ENCODE measurements at regions of chr7 and their contacts with region 1.

Region 1: GRCh38 chr7:1532483-1533424 is 2.3 kb downstream of the MAFK start:
- DNase-seq: peak in 8 of 9 donors; percentile 57 to 70 (median 62)
- ATAC-seq: peak; percentile 52
- H3K4me3 ChIP-seq: peak overlapping the region; percentile 74
- H3K4me3 Mint-ChIP-seq: peak overlapping the region; percentile 87 to 94 (median 92)
- H3K27ac ChIP-seq: peak overlapping the region; percentile 90
- H3K27ac Mint-ChIP-seq: peak overlapping the region; percentile 92 to 99 (median 97)
- H3K4me1 ChIP-seq: peaks cover 7 to 10% of the 10 kb centered on the region in 2 donors
- H3K4me1 Mint-ChIP-seq: peaks cover 15 to 36% (median 21%) of the 10 kb centered on the region in 7 donors
- H3K27me3 ChIP-seq: no peaks in the 10 kb centered on the region
- H3K27me3 Mint-ChIP-seq: peaks cover 0 to 3% (median 0%) of the 10 kb centered on the region in 5 donors

Region 2: GRCh38 chr7:1459522-1459892 is 73.2 kb before region 1 on chr7:
- CTCF ChIA-PET with region 1: no interaction called
- POLR2A ChIA-PET with region 1: interaction called, 3 read pairs
- intact Hi-C with region 1: loop called (anchors 1 kb)
- DNase-seq: peak; percentile 98 to 99 (median 99)
- ATAC-seq: peak; percentile 97
- H3K4me3 ChIP-seq: peak overlapping the region; percentile 73
- H3K4me3 Mint-ChIP-seq: peak overlapping the region in 8 of 10 donors; percentile 58 to 75 (median 70)
- H3K27ac ChIP-seq: peak overlapping the region; percentile 55
- H3K27ac Mint-ChIP-seq: peak overlapping the region in 1 of 9 donors; percentile 76
- H3K4me1 ChIP-seq: peaks cover 8 to 14% of the 10 kb centered on the region in 2 donors
- H3K4me1 Mint-ChIP-seq: peaks cover 7 to 25% (median 18%) of the 10 kb centered on the region in 7 donors
- H3K27me3 ChIP-seq: no peaks in the 10 kb centered on the region
- H3K27me3 Mint-ChIP-seq: peaks cover 0 to 5% (median 0%) of the 10 kb centered on the region in 5 donors

Region 3: GRCh38 chr7:1512781-1513656 is 19.7 kb before region 1 on chr7:
- CTCF ChIA-PET with region 1: no interaction called
- POLR2A ChIA-PET with region 1: interaction called, 6 read pairs
- intact Hi-C with region 1: loop called (anchors 1 to 2 kb)
- DNase-seq: peak; percentile 34 to 71 (median 67)
- ATAC-seq: peak; percentile 82
- H3K4me3 ChIP-seq: no peak overlapping the region
- H3K4me3 Mint-ChIP-seq: peak overlapping the region; percentile 12 to 75 (median 62)
- H3K27ac ChIP-seq: no peak overlapping the region
- H3K27ac Mint-ChIP-seq: peak overlapping the region; percentile 15 to 87 (median 68)
- H3K4me1 ChIP-seq: peaks cover 4 to 27% of the 10 kb centered on the region in 2 donors
- H3K4me1 Mint-ChIP-seq: peaks cover 14 to 45% (median 20%) of the 10 kb centered on the region in 7 donors
- H3K27me3 ChIP-seq: no peaks in the 10 kb centered on the region
- H3K27me3 Mint-ChIP-seq: no peaks in the 10 kb centered on the region

Region 4: GRCh38 chr7:1555809-1556540 is 23.2 kb after region 1 on chr7 and contains the start of gene TMEM184A:
- CTCF ChIA-PET with region 1: no interaction called
- POLR2A ChIA-PET with region 1: no interaction called
- intact Hi-C with region 1: loop called in 1 of 2 experiments (anchors 1 kb)
- DNase-seq: peak in 7 of 9 donors; percentile 48 to 67 (median 57)
- ATAC-seq: peak; percentile 70
- H3K4me3 ChIP-seq: no peak within 1 kb of the TSS
- H3K4me3 Mint-ChIP-seq: peak within 1 kb of the TSS in 1 of 10 donors; percentile 34
- H3K27ac ChIP-seq: no peak within 1 kb of the TSS
- H3K27ac Mint-ChIP-seq: peak within 1 kb of the TSS in 1 of 9 donors; percentile 56
- H3K4me1 ChIP-seq: no peaks in the 10 kb centered on the region
- H3K4me1 Mint-ChIP-seq: peaks cover 0 to 4% (median 0%) of the 10 kb centered on the region in 7 donors
- H3K27me3 ChIP-seq: no peaks in the 10 kb centered on the region
- H3K27me3 Mint-ChIP-seq: no peaks in the 10 kb centered on the region
- total RNA-seq, gene TMEM184A: 0.05 TPM in 1 of 5 experiments, not detected in the others

Region 5: DNA sequence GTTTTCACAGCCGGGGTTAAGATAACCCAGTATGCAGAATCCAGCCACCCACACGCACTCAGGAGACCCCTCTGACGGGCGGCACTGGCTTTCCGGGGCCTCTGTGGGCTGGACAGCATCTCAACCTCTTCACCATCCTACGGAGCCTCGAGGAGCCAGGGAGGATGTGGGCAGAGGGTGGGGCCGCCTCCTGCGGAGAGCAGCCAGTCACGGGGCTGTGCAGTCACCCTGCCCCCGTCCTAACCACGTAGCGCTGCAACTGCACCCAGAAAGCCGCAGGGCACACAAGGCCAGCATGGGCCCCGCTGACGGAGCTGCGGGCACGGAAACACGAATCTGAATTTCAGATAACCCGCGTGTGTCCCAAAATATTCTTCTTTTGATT is 407.6 kb after region 1 on chr7:
- CTCF ChIA-PET with region 1: no interaction called
- POLR2A ChIA-PET with region 1: no interaction called
- intact Hi-C with region 1: loop called in 1 of 2 experiments (anchors 5 kb)
- DNase-seq: peak; percentile 78 to 98 (median 96)
- ATAC-seq: peak; percentile 95
- H3K4me3 ChIP-seq: peak overlapping the region; percentile 91
- H3K4me3 Mint-ChIP-seq: peak overlapping the region; percentile 92 to 99 (median 98)
- H3K27ac ChIP-seq: peak overlapping the region; percentile 96
- H3K27ac Mint-ChIP-seq: peak overlapping the region; percentile 87 to 100 (median 99)
- H3K4me1 ChIP-seq: peaks cover 35 to 65% of the 10 kb centered on the region in 2 donors
- H3K4me1 Mint-ChIP-seq: peaks cover 41 to 81% (median 64%) of the 10 kb centered on the region in 7 donors
- H3K27me3 ChIP-seq: no peaks in the 10 kb centered on the region
- H3K27me3 Mint-ChIP-seq: no peaks in the 10 kb centered on the region

Region 6: DNA sequence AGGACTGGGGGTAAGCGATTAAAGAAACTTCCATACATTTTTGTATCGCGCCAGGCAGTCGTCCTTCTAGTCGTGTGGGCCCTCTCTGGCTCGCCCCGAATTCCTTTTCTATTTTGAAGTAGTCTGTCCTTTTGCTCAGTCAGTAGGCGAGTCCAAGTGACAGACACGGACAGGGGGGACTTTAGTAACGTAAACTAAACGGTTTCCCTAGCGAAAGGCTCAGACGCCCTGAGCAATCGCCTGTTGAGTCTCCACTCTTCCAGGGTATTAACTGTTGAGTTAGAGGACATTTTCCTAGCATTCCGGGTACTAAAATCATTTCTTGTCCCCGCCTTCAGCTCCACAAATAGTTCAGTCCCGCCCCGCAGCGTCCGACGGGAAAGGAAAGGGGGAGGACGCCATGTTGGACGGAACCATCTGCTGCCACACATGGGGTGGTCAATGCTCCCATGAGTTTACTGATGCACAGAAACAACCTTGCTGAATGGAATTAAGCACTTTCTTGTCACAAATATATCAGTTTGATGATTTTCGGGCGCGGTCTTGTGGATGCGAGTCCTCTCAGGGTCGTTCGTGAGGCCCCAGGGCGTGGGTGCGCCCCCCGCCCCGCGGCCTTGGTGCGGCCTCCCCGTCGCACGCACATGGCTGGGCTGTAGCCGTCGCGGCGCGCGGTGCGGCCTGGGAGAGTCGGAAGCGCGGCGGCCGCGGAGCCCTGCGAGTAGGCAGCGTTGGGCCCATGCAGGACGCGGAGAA is 821.6 kb after region 1 on chr7 and contains the start of gene EIF3B:
- CTCF ChIA-PET with region 1: no interaction called
- POLR2A ChIA-PET with region 1: interaction called, 6 read pairs
- intact Hi-C with region 1: loop called in 1 of 2 experiments (anchors 1 kb)
- DNase-seq: peak; percentile 87 to 97 (median 94)
- ATAC-seq: peak; percentile 90
- H3K4me3 ChIP-seq: peak within 1 kb of the TSS; percentile 89
- H3K4me3 Mint-ChIP-seq: peak within 1 kb of the TSS; percentile 90 to 100 (median 94)
- H3K27ac ChIP-seq: peak within 1 kb of the TSS; percentile 97
- H3K27ac Mint-ChIP-seq: peak within 1 kb of the TSS; percentile 98 to 100 (median 100)
- H3K4me1 ChIP-seq: peaks cover 25 to 38% of the 10 kb centered on the region in 2 donors
- H3K4me1 Mint-ChIP-seq: peaks cover 16 to 48% (median 31%) of the 10 kb centered on the region in 7 donors
- H3K27me3 ChIP-seq: no peaks in the 10 kb centered on the region
- H3K27me3 Mint-ChIP-seq: peaks cover 0 to 3% (median 0%) of the 10 kb centered on the region in 5 donors
- total RNA-seq, gene EIF3B: 127 to 189 (median 158) TPM

Region 7: DNA sequence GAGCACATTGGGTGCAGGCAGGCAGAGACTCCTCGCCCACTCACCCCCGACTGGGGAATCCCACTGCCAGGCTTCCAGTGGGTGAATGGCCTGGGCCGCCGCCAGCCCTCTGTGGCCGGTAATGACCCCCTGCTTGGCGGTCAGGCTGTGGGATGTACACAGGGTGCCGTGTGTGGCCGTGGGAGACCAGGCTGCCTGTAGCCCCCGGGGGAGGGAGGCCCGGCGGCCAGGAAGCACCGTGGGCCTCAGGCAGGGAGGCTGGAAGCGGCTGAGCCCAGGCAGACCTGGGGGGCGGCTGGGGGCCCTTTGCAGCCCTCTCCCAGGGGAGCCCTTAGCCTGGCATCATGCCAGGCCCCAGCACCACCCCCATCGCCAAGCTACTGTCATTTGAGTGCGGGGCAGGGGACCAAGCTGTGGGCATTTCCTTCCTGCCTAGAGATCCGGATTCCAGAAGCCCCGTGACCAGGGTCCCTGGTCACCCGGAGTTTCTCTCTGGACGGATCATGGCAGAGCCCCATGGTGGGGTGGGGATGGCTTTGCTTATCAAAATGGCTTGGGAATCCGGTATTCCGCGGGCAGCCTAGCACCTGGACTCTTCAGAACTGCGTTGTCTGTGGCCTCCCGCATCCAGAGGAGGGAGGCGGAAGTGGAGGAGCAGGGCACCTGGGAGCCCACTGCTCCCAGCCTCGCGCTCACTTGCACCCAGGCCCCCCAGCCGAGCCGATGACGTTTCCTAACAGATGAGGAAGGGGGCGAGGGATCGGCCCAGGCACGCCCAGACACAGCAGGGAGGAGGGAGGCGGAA is 1100.2 kb after region 1 on chr7:
- CTCF ChIA-PET with region 1: no interaction called
- POLR2A ChIA-PET with region 1: no interaction called
- intact Hi-C with region 1: loop called in 1 of 2 experiments (anchors 1 kb)
- DNase-seq: peak in 8 of 9 donors; percentile 24 to 73 (median 37)
- ATAC-seq: no peak
- H3K4me3 ChIP-seq: peak overlapping the region; percentile 58
- H3K4me3 Mint-ChIP-seq: peak overlapping the region; percentile 86 to 96 (median 89)
- H3K27ac ChIP-seq: peak overlapping the region; percentile 79
- H3K27ac Mint-ChIP-seq: peak overlapping the region in 8 of 9 donors; percentile 72 to 88 (median 81)
- H3K4me1 ChIP-seq: peaks cover 3 to 16% of the 10 kb centered on the region in 2 donors
- H3K4me1 Mint-ChIP-seq: peaks cover 0 to 19% (median 15%) of the 10 kb centered on the region in 7 donors
- H3K27me3 ChIP-seq: no peaks in the 10 kb centered on the region
- H3K27me3 Mint-ChIP-seq: peaks cover 0 to 4% (median 0%) of the 10 kb centered on the region in 5 donors